MCF 10A (cell line): ENCODE measurements at regions of chr18 and their contacts with region 1.

Region 1: GRCh38 chr18:62131301-62131909 is 55.5 kb downstream of the PIGN start:
- DNase-seq: peak; percentile 75
- H3K4me3 Mint-ChIP-seq: no peak overlapping the region
- H3K27ac Mint-ChIP-seq: no peak overlapping the region
- H3K4me1 Mint-ChIP-seq: peaks cover 19% of the 10 kb centered on the region
- H3K27me3 Mint-ChIP-seq: no peaks in the 10 kb centered on the region
- CTCF ChIP-seq: peak; percentile 85

Region 2: DNA sequence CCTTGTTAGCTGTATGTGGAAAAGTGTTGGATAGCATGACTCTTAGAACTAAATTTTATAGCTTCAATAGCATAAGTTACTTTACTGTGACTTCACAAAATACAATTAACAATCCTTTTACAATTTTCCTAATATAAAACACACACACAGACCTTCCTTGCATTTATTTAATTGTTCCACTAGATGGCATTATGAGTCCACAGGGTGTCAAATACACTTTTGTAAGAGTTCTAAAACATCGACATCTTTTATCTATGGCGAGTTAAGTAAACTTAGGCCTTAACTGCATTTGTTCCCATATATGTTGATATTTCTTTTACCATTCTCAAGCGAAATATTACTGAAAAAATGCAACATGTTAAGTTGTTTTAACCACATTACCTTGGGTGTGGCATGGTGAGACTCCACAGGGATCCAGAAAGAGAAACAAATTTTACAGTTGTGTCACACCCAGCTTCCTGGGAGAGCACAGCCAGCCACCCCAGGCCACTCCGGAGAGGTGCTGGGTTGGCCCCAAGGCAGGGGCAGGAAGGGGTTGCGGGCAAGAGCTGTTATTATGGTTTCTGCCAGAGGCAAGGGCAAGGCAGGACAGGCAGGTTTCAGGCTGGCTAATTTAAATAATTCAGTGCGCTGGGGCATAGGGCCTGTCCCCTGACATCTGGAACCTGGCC is 1446.4 kb before region 1 on chr18:
- CTCF ChIA-PET with region 1: no interaction called
- POLR2A ChIA-PET with region 1: no interaction called
- intact Hi-C with region 1: loop called (anchors 2 kb)
- DNase-seq: peak; percentile 46
- H3K4me3 Mint-ChIP-seq: no peak overlapping the region
- H3K27ac Mint-ChIP-seq: no peak overlapping the region
- H3K4me1 Mint-ChIP-seq: no peaks in the 10 kb centered on the region
- H3K27me3 Mint-ChIP-seq: peaks cover 63% of the 10 kb centered on the region
- CTCF ChIP-seq: peak; percentile 67

Region 3: DNA sequence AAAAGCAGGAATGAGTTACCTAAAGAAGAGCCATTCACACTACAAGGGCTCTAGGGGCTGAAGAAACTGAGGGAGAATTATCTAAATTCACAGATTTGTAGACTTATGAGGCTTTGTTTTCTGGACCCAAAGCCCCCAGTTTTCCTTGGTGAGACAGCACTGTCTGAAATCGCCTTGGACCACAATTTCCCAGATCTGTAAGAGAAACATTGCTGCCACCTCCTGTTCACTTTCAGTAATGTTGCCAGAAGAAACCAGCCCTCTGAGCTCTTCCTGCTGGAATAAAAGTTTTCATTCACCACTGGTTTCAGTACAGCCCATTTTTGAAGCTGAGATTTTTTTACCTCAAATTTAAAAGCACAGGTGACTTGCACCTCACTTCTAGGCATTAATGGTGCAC is 628.9 kb before region 1 on chr18:
- CTCF ChIA-PET with region 1: interaction called, 7 read pairs
- POLR2A ChIA-PET with region 1: no interaction called
- intact Hi-C with region 1: loop called (anchors 1 kb)
- DNase-seq: peak; percentile 61
- H3K4me3 Mint-ChIP-seq: no peak overlapping the region
- H3K27ac Mint-ChIP-seq: no peak overlapping the region
- H3K4me1 Mint-ChIP-seq: peaks cover 12% of the 10 kb centered on the region
- H3K27me3 Mint-ChIP-seq: peaks cover 15% of the 10 kb centered on the region
- CTCF ChIP-seq: peak; percentile 66

Region 4: GRCh38 chr18:61581578-61582201 is 549.7 kb before region 1 on chr18:
- CTCF ChIA-PET with region 1: interaction called, 59 read pairs
- POLR2A ChIA-PET with region 1: no interaction called
- intact Hi-C with region 1: loop called (anchors 1 kb)
- DNase-seq: peak; percentile 60
- H3K4me3 Mint-ChIP-seq: peak overlapping the region; percentile 40
- H3K27ac Mint-ChIP-seq: no peak overlapping the region
- H3K4me1 Mint-ChIP-seq: peaks cover 25% of the 10 kb centered on the region
- H3K27me3 Mint-ChIP-seq: no peaks in the 10 kb centered on the region
- CTCF ChIP-seq: peak; percentile 97

Region 5: DNA sequence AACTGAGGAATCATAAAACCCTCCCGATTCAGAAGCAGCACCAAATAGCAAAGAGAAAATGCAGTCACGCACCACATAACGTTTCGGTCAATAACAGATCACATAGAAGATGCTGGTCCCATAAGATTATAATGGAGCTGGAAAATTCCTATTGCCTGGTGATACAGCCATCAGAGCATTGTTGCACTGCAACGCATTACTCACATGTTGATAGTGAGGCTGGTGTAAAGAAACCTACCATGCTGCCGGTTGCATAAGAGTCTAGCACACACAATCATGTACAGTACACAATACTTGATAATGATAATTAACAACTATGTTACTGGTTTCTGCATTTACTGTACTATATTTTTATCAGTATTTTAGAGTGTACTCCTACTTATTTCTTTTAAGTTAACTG is 271.1 kb before region 1 on chr18:
- CTCF ChIA-PET with region 1: no interaction called
- POLR2A ChIA-PET with region 1: no interaction called
- intact Hi-C with region 1: loop called (anchors 1 kb)
- DNase-seq: no peak
- H3K4me3 Mint-ChIP-seq: no peak overlapping the region
- H3K27ac Mint-ChIP-seq: no peak overlapping the region
- H3K4me1 Mint-ChIP-seq: peaks cover 6% of the 10 kb centered on the region
- H3K27me3 Mint-ChIP-seq: no peaks in the 10 kb centered on the region
- CTCF ChIP-seq: no peak

Region 6: DNA sequence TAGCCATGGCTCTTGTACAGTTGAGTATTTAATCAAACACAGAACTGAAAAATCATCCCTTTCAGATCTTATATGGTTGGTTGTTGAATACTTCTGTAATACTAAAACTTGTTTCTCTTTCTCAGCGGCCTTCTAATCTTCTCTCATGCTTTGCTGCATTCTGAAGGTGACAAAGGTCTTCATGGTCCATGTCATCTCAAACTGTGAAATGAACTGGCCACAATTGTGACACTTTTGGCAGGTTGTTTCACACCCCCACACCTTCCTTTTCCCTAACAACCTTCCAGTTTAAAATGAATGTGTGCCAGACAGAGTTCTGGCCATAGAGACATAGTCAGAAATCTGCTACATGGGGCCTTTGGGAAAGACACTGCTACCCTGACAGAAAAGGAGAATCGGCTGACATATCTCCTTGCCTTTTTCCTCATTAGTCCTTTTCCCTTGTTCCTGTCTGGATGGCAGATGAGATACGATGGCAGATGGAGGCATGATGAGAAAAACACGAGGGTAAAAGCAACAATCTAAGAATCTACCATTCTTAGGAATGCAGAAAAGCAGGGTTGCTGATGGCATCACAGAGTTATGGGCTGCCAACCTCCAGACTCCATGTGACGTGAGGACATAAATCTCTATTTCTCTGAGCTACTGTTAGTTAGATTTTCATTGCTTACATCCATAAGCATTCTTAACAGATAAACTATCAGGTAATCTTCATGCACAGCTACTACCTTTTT is 51.1 kb before region 1 on chr18:
- CTCF ChIA-PET with region 1: no interaction called
- POLR2A ChIA-PET with region 1: no interaction called
- intact Hi-C with region 1: no loop called
- DNase-seq: no peak
- H3K4me3 Mint-ChIP-seq: no peak overlapping the region
- H3K27ac Mint-ChIP-seq: no peak overlapping the region
- H3K4me1 Mint-ChIP-seq: no peaks in the 10 kb centered on the region
- H3K27me3 Mint-ChIP-seq: no peaks in the 10 kb centered on the region
- CTCF ChIP-seq: no peak

Region 7: DNA sequence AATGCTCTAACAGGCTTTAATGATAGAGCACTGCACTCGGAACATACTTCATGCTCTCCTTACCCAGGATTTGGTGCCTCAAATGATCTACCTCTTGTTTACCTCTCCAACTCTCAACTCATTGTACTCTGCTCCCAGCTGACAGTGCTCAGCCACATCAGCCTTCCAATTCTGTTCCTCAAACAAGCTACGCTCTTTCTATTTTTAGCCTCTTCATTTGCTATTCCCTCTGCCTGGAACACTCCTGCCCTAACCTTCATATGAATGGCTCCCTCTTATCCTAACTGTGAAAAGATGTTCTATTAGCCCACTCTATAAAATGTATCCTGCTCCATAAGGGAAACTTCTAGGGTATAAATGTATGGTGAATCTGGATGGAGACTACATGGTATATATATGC is 12.9 kb after region 1 on chr18:
- CTCF ChIA-PET with region 1: interaction called, 13 read pairs
- POLR2A ChIA-PET with region 1: interaction called, 3 read pairs
- intact Hi-C with region 1: no loop called
- DNase-seq: no peak
- H3K4me3 Mint-ChIP-seq: no peak overlapping the region
- H3K27ac Mint-ChIP-seq: no peak overlapping the region
- H3K4me1 Mint-ChIP-seq: no peaks in the 10 kb centered on the region
- H3K27me3 Mint-ChIP-seq: no peaks in the 10 kb centered on the region
- CTCF ChIP-seq: no peak

Region 8: GRCh38 chr18:62379051-62379450 is 247.6 kb after region 1 on chr18:
- CTCF ChIA-PET with region 1: no interaction called
- POLR2A ChIA-PET with region 1: no interaction called
- intact Hi-C with region 1: no loop called
- DNase-seq: no peak
- H3K4me3 Mint-ChIP-seq: no peak overlapping the region
- H3K27ac Mint-ChIP-seq: no peak overlapping the region
- H3K4me1 Mint-ChIP-seq: peaks cover 4% of the 10 kb centered on the region
- H3K27me3 Mint-ChIP-seq: no peaks in the 10 kb centered on the region
- CTCF ChIP-seq: no peak

Region 9: GRCh38 chr18:62464266-62464665 is 332.9 kb after region 1 on chr18:
- CTCF ChIA-PET with region 1: no interaction called
- POLR2A ChIA-PET with region 1: no interaction called
- intact Hi-C with region 1: no loop called
- DNase-seq: no peak
- H3K4me3 Mint-ChIP-seq: no peak overlapping the region
- H3K27ac Mint-ChIP-seq: no peak overlapping the region
- H3K4me1 Mint-ChIP-seq: no peaks in the 10 kb centered on the region
- H3K27me3 Mint-ChIP-seq: no peaks in the 10 kb centered on the region
- CTCF ChIP-seq: no peak